Activated CD8-positive, alpha-beta memory T cell treated with anti-CD3 and anti-CD28 coated beads, Interleukin-2, amount 10 ng/mL, durations not matched to agents 7 days and 5 days (primary cell): ENCODE measurements at regions of chr17 and their contacts with region 1.

Region 1: DNA sequence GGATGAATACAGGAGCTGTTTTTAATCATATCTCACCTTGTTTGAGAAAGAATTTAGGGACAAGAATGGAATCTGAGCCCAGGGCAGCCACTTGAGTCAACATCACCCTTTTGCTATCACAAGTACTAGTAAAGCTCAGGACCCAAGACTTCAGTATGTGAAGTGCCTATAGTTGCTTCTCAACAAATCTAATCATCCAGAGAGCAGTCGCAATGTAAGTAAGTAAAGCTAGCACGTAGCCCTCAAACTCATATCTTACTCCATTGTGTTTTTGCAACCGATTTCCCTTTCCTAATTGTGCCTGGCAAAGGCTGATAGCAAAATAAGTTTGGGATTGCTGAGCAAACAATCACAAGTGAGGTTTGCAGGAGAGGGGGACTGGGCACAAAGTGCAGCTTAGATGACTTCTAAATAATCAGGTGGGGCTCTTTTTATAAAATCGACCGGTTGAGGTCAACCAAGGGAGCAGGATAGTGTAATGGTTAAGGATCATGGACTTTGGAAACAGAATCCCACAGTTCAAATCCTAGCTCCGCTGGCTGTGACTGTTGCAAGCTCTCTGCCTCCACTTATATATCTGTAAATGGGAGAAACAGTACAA is 13.0 kb downstream of the TOB1 start:
- DNase-seq: peak; percentile 25
- ATAC-seq: no peak
- H3K4me3 Mint-ChIP-seq: peak overlapping the region; percentile 71
- H3K27ac Mint-ChIP-seq: peak overlapping the region; percentile 92
- H3K4me1 Mint-ChIP-seq: peaks cover 25% of the 10 kb centered on the region
- H3K27me3 Mint-ChIP-seq: peaks cover 20% of the 10 kb centered on the region

Region 2: GRCh38 chr17:50841949-50842354 is 11.2 kb before region 1 on chr17:
- CTCF ChIA-PET with region 1: interaction called, 40 read pairs
- DNase-seq: peak; percentile 72
- ATAC-seq: peak; percentile 79
- H3K4me3 Mint-ChIP-seq: no peak overlapping the region
- H3K27ac Mint-ChIP-seq: no peak overlapping the region
- H3K4me1 Mint-ChIP-seq: no peaks in the 10 kb centered on the region
- H3K27me3 Mint-ChIP-seq: no peaks in the 10 kb centered on the region

Region 3: DNA sequence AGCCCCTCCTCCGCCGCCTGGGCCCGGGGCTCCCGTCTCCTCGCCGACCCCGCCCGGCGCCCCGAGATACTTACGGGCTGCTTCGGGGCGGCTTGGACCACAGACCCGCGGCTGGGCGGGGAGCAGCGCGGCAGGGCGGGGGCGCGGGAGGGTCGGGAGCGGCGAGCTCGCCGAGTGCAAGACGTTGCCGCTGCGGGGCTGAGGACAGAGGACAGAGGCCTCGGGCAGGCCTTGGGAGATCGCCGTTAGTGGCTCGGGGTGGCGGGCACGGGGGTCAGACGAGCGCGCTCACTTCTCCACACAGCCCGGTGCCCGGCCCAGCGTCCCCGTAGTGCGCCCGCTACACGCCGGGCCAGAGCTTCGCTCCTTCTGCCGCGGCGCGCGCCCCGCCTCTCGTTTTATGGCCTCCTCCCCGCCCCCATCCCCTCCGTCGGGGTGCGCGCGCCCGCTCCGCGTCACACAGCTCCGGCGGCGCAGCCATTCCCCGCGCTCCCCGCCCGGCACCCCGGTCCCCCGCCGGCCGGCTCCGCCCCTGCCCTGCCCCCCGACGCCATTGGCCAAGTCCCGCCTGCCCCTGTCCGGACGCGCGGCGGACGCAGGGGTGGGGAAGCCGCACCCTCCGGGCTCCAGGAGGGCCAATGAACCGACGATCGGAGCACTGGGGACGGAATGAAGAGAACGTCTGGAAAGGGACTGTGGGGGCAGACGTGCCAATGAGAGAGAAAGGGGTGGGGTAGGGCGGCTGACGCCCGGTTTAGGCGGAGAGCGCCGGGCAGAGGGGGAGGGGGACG is 13.1 kb after region 1 on chr17 and contains the start of gene TOB1:
- CTCF ChIA-PET with region 1: interaction called, 44 read pairs
- DNase-seq: peak; percentile 97
- ATAC-seq: peak; percentile 75
- H3K4me3 Mint-ChIP-seq: peak within 1 kb of the TSS; percentile 98
- H3K27ac Mint-ChIP-seq: peak within 1 kb of the TSS; percentile 96
- H3K4me1 Mint-ChIP-seq: peaks cover 43% of the 10 kb centered on the region
- H3K27me3 Mint-ChIP-seq: peaks cover 14% of the 10 kb centered on the region
- total RNA-seq, gene TOB1: 34.1 to 47.5 TPM

Region 4: GRCh38 chr17:50926523-50926922 is 73.4 kb after region 1 on chr17:
- CTCF ChIA-PET with region 1: interaction called, 25 read pairs
- DNase-seq: peak; percentile 85
- ATAC-seq: peak; percentile 73
- H3K4me3 Mint-ChIP-seq: no peak overlapping the region
- H3K27ac Mint-ChIP-seq: peak overlapping the region; percentile 70
- H3K4me1 Mint-ChIP-seq: peaks cover 27% of the 10 kb centered on the region
- H3K27me3 Mint-ChIP-seq: peaks cover 45% of the 10 kb centered on the region

Region 5: DNA sequence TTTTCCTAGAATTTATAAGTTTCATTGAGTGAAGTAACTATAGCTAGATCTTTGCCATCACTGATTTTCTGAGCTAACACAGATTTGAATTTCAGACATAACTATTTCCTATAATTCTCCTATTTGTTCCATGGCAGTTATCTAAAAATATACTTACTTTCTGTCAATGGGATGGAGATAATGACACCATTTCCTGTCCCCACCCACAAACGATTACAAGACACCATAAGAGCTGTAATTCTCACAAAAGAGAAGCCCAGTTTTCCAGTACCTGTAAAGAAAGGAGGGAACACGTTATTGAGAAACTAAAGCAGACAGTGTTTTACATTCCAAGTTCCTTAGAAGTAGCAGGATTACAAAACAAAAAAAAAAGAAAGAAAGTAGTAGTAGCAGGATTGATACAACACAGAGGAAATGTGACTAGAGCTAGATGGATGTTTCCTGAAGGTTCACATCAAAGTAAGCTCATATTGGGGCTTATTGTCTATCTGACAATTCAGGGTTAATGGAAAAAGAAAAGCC is 123.9 kb after region 1 on chr17:
- CTCF ChIA-PET with region 1: interaction called, 12 read pairs
- DNase-seq: no peak
- ATAC-seq: no peak
- H3K4me3 Mint-ChIP-seq: no peak overlapping the region
- H3K27ac Mint-ChIP-seq: peak overlapping the region; percentile 83
- H3K4me1 Mint-ChIP-seq: peaks cover 21% of the 10 kb centered on the region
- H3K27me3 Mint-ChIP-seq: no peaks in the 10 kb centered on the region

Region 6: DNA sequence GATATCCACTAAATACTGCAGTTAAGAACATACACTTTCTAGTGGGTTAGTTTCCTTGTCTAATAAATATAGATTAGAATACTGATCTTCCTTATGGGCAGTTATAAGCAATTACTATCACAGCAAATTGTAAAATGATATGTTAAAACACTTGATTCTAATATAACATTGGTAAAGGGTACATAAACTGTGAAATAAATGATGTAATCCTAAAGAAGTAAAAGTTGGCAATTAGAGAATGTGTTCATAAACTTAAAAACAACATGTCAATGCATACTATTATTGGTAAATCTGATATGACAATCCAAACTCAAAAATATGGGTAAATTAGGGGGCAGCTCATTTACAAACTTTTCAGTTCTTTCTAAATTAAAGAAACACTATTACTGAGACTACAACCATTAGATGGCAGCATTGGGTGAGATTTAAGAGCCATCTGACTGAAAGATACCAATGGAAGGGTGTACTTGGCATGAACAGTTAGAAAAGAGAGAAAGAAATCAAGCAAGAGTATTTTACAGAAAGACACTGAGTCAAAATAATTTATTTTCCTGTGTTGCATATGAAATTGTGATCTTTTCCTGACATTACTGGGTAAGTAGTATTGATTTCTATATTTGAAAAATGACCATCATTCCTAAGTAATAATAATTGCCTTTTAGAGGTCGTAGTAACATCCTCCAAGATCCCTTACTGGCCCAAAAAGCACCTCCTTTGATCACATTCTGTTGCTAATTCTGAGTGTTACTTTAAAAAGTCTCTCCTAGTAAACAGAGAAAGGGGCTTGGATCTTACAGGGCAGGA is 147.9 kb after region 1 on chr17:
- CTCF ChIA-PET with region 1: interaction called, 12 read pairs
- DNase-seq: no peak
- ATAC-seq: peak; percentile 76
- H3K4me3 Mint-ChIP-seq: no peak overlapping the region
- H3K27ac Mint-ChIP-seq: peak overlapping the region; percentile 33
- H3K4me1 Mint-ChIP-seq: peaks cover 4% of the 10 kb centered on the region
- H3K27me3 Mint-ChIP-seq: no peaks in the 10 kb centered on the region

Region 7: DNA sequence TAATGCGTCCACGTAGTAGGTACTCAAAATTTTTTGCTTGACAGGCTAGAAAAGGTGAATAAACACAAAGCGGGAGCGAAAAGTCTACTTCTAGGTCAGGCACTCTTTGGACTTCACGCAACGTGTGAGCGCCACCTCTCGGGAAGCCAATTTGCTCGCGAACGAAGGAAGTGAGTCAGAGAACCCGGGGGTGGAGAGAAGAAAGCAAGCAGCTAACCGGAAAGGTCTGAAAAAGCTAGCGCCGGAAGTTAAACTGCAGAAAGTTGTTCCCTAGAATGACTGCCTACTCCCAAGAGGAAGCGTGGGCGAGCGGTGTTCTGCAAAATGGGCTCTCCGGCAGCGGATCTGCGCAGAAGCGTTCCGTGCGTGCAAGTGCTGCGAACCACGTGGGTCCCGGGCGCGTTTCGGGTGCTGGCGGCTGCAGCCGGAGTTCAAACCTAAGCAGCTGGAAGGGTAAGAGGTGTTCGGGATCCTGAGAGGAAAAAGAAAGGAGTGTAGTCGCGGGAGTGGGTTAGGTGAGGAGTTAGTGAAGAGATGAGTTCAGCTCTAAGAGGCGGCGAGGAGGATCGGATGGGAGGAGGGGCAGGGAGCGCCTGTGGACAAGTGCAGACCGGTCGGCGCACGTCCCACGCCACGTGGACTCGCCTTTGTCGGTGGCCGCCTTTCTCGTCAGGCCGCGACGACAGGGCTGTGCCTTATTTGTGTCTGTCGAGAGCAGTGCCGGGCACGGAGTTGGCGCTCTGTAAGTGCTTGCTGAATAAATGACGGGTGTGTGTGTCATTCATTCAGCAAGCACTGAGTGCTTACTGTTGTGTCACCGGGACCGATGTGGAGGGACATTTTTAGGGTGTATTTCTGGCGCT is 300.3 kb after region 1 on chr17 and contains the start of gene NME1:
- CTCF ChIA-PET with region 1: interaction called, 11 read pairs
- DNase-seq: peak; percentile 98
- ATAC-seq: peak; percentile 94
- H3K4me3 Mint-ChIP-seq: no peak within 1 kb of the TSS
- H3K27ac Mint-ChIP-seq: no peak within 1 kb of the TSS
- H3K4me1 Mint-ChIP-seq: peaks cover 22% of the 10 kb centered on the region
- H3K27me3 Mint-ChIP-seq: no peaks in the 10 kb centered on the region
- total RNA-seq, gene NME1: 143 to 248 TPM